Activated CD4-positive, alpha-beta T cell treated with anti-CD3 and anti-CD28 coated beads for 36 hours (primary cell): ENCODE measurements at regions of chr14 and their contacts with region 1.

Region 1: DNA sequence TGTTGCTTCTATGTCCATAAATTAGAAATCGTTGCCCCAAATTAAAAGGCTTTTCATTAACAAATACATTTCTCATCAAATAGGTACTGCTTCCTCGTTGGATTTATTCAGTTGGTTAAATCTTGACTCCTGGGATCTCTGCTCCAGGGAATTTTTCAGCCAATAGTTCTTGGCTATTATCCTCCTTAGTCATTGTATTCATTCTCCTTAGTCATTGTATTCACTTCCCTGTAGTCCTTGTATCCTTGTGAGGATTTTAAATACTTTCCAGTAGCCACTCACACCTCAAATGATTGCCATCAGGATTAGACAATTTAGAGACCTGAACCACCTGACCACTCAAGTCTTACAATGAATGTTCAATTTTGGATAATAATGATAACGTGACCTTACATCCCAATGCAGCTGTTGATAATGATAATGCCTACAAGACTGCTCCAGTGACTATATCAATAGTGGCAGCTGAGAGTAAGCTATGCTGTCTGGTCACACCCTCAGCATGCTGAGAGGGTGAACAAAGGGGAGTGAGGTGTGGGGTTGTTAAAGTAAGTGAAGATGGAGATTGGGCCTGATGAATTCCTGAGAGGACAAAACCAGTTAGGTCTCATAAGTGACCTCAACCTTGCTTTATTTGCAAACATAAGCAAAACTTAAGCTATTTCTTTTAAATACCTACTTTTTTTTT is 193.7 kb upstream of the RTL1 start:
- DNase-seq: no peak
- ATAC-seq: no peak
- H3K4me3 Mint-ChIP-seq: no peak overlapping the region
- H3K27ac Mint-ChIP-seq: no peak overlapping the region
- H3K4me1 Mint-ChIP-seq: no peaks in the 10 kb centered on the region
- H3K27me3 Mint-ChIP-seq: peaks cover 18% of the 10 kb centered on the region

Region 2: DNA sequence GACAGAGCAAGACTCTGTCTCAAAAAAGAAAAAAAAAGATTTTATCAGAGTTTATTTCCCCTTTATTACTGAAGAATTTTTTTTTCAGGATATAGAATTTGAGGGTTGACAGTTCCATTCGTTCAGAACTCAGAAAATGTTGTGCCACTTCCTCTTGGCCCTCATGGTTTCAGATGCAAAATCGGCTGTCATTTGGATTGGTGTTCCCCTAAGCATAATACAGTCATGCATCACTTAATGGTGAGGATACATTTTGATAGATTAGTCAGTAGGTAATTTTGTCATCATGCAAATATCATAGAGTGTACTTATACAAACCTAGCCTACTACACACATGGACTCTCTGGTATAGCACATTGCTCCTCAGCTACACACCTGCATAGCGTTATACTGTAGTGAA is 70.2 kb after region 1 on chr14:
- CTCF ChIA-PET with region 1: no interaction called
- POLR2A ChIA-PET with region 1: no interaction called
- intact Hi-C with region 1: loop called in 1 of 2 experiments (anchors 2 kb)
- DNase-seq: no peak
- ATAC-seq: no peak
- H3K4me3 Mint-ChIP-seq: no peak overlapping the region
- H3K27ac Mint-ChIP-seq: no peak overlapping the region
- H3K4me1 Mint-ChIP-seq: no peaks in the 10 kb centered on the region
- H3K27me3 Mint-ChIP-seq: peaks cover 5% of the 10 kb centered on the region